ENCODE measurements at regions of chr14 and their contacts with region 1.

Region 1: DNA sequence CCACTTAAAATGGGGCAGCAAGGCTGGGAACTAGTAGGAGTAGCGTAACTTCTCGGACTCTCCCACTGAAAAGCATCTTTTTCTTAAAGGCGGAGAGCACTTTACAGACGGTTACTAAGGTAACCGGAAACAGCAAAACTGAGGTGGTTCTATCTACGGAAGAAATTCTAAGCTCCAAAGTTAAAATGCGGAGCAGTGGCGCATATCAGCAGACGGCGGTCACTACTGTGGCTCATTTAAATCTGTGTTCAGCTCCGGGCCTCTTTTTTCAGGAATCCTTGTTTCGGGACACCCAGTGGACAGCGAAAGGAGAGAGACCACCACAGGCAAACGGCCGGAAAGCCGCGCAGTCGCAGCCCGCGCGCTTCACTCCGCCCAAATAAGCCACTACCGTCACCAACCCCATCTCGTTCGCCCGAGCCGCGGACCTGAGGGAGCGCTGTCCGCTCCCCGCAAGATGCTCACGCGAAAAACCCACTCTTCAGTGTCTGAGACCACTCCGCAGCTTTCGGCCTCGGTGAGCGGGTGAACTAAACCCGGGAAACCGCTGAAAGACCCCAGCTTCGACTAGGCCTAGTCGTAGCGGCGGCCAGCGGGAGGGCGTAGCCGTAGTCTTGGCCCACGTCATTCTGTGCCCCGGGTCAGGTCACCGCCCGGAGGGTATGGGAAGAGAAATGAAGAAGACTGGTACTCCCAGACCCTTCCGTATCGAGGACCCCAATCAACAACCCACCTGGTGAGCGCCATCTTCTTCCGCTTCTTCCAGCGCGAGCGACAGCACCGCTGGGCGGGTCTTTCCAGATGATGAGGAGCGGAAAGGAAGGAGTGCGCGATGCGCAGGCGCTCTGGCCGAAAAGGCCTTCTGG is at the start of gene SNW1:
- DNase-seq: peak; percentile 77
- ATAC-seq: peak; percentile 91
- H3K4me3 Mint-ChIP-seq: peak within 1 kb of the TSS; percentile 97
- H3K27ac Mint-ChIP-seq: peak within 1 kb of the TSS; percentile 97
- H3K4me1 Mint-ChIP-seq: peaks cover 37% of the 10 kb centered on the region
- H3K27me3 Mint-ChIP-seq: no peaks in the 10 kb centered on the region
- CTCF ChIP-seq: no peak
- total RNA-seq, gene SNW1: 88.2 and 89.3 TPM in 2 replicates

Region 2: DNA sequence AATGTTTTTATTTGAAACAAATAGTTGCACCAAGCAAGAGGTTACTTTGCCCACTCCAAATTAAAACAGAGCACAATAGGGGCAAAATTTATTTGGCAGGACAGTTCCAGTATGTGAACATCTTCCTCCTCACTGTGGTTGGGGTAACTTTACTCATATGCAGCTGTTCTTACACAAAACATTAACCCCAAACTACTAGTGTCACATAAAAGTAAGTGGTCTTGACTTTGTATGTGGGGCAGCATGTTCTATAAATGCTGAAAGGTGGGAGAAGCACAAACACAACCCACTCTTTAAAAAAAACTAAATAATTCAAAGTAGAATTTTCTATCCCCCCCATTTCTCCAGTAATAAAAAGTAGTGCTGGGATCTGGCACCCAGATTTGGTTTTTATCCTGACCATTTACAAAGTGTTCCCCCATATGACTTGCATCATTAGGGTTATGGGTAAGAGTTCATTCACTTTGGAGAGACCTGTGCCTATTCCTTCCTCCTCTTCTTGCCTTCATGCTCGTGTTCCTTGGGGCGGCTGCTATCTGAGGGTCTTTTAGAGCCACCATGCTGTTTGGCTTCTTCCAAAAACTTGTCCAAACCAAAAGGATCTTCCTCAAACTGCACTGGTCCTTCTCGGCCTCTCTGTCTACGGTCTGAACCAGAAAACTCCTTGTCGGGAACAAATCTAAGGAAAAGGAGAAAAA is 42.9 kb before region 1 on chr14:
- CTCF ChIA-PET with region 1: no interaction called
- POLR2A ChIA-PET with region 1: interaction called, 10 read pairs
- intact Hi-C with region 1: no loop called
- DNase-seq: no peak
- ATAC-seq: no peak
- H3K4me3 Mint-ChIP-seq: no peak overlapping the region
- H3K27ac Mint-ChIP-seq: no peak overlapping the region
- H3K4me1 Mint-ChIP-seq: peaks cover 3% of the 10 kb centered on the region
- H3K27me3 Mint-ChIP-seq: no peaks in the 10 kb centered on the region
- CTCF ChIP-seq: no peak